Breast epithelium (tissue), 4 donors: ENCODE measurements at regions of chr15 and their contacts with region 1.

Region 1: DNA sequence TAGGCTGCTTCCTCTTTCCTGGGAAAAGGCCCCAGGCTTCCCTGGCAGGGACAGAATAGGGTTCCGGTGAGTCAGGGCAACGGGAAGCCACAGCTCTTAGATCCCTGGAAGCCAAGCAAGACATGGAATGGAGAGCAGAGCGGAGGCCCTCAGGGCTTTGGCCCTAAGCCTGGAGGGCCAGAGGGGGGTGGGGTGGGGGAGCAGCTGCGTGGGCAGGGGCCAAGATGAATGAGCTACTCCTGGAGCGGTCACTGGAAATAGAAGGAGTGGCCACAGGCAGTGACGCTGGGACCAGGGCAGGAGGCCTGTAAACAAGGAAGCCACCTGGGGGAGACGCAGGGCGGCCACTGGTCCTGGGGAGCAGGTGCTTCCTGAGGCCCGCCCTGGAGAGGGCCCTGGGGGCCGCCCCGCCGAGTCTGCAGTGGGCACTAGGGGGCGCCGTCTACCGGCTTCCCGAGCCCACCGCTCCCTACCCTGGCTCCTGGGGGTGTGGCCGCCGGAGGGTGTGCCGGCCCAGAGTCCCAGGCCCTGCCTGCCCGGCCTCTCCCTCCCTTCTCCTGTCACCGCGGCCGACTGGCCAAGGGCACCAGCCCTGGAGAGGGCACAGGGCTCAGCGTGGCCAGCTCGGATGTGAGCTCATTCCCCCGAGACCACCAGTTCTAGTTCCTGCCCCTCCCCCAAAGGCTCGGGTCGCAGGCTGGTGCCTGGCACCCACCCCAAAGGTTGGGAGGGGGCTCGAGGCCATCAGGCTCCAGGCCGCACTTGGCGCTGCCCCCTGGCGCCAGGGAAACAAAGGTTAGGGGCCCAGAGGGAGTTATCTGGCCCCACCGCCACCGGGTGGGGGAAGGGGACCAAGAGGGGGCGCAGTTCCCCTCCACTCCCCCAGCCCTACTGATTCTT is 12.1 kb downstream of the VPS18 start:
- DNase-seq: peak; percentile 88
- H3K4me3 ChIP-seq: peak overlapping the region; percentile 44 to 68 (median 51)
- H3K27ac ChIP-seq: peak overlapping the region; percentile 97 to 98
- H3K4me1 ChIP-seq: peaks cover 6 to 24% of the 10 kb centered on the region in 2 donors
- H3K27me3 ChIP-seq: no peaks in the 10 kb centered on the region
- CTCF ChIP-seq: peak; percentile 54 to 85 (median 84)
- POLR2A ChIP-seq: no peak

Region 2: GRCh38 chr15:39453500-39454073 is 1452.8 kb before region 1 on chr15:
- intact Hi-C with region 1: no loop called
- DNase-seq: no peak
- H3K4me3 ChIP-seq: no peak overlapping the region
- H3K27ac ChIP-seq: no peak overlapping the region
- H3K4me1 ChIP-seq: no peaks in the 10 kb centered on the region
- H3K27me3 ChIP-seq: no peaks in the 10 kb centered on the region
- CTCF ChIP-seq: no peak
- POLR2A ChIP-seq: no peak

Region 3: GRCh38 chr15:40421246-40422157 is 484.8 kb before region 1 on chr15:
- intact Hi-C with region 1: no loop called
- DNase-seq: peak in 1 of 2 donors; percentile 81
- H3K4me3 ChIP-seq: peak overlapping the region in 1 of 3 donors; percentile 23
- H3K27ac ChIP-seq: peak overlapping the region; percentile 73 to 80
- H3K4me1 ChIP-seq: peaks cover 0 to 7% of the 10 kb centered on the region in 2 donors
- H3K27me3 ChIP-seq: no peaks in the 10 kb centered on the region
- CTCF ChIP-seq: peak; percentile 81 to 97 (median 93)
- POLR2A ChIP-seq: no peak

Region 4: GRCh38 chr15:40694688-40695468 is 211.5 kb before region 1 on chr15 and contains the start of gene RAD51:
- intact Hi-C with region 1: loop called (anchors 10 kb)
- DNase-seq: peak; percentile 84 to 92
- H3K4me3 ChIP-seq: peak within 1 kb of the TSS; percentile 68 to 90 (median 69)
- H3K27ac ChIP-seq: peak within 1 kb of the TSS; percentile 98 to 100
- H3K4me1 ChIP-seq: peaks cover 5 to 7% of the 10 kb centered on the region in 2 donors
- H3K27me3 ChIP-seq: no peaks in the 10 kb centered on the region
- CTCF ChIP-seq: peak in 1 of 3 donors; percentile 5
- POLR2A ChIP-seq: peak; percentile 59
- total RNA-seq, gene RAD51: 0.44 TPM in 1 of 3 donors, not detected in the others

Region 5: GRCh38 chr15:40934457-40934856 is 28.1 kb after region 1 on chr15:
- intact Hi-C with region 1: loop called (anchors 1 kb)
- DNase-seq: no peak
- H3K4me3 ChIP-seq: no peak overlapping the region
- H3K27ac ChIP-seq: no peak overlapping the region
- H3K4me1 ChIP-seq: peaks cover 0 to 10% of the 10 kb centered on the region in 2 donors
- H3K27me3 ChIP-seq: peaks cover 0 to 33% of the 10 kb centered on the region in 2 donors
- CTCF ChIP-seq: no peak
- POLR2A ChIP-seq: no peak

Region 6: DNA sequence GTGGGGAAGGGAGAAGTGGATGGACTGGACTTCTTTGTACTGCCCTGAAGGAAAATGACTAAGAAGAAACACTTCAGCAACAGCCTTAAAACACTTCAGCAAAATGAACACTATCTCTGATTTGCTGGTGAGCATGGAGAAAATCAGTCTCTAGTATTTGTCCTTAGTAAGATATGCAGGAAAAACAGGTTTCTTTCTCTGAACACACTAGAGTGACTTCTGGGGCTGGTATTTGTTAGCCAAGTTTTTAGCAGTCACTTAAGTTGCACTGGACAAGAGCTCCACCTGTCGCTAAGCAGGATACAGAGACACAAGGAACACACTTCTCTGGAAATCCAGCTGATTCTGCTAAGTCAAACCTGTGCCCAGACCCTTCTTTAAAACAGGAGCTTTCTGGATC is 112.2 kb after region 1 on chr15:
- intact Hi-C with region 1: loop called (anchors 5 kb)
- DNase-seq: peak in 1 of 2 donors; percentile 52
- H3K4me3 ChIP-seq: no peak overlapping the region
- H3K27ac ChIP-seq: no peak overlapping the region
- H3K4me1 ChIP-seq: no peaks in the 10 kb centered on the region
- H3K27me3 ChIP-seq: no peaks in the 10 kb centered on the region
- CTCF ChIP-seq: peak in 2 of 3 donors; percentile 44 to 74
- POLR2A ChIP-seq: no peak